Endothelial cell of umbilical vein (primary cell): ENCODE measurements at regions of chr5 and their contacts with region 1.

Region 1: DNA sequence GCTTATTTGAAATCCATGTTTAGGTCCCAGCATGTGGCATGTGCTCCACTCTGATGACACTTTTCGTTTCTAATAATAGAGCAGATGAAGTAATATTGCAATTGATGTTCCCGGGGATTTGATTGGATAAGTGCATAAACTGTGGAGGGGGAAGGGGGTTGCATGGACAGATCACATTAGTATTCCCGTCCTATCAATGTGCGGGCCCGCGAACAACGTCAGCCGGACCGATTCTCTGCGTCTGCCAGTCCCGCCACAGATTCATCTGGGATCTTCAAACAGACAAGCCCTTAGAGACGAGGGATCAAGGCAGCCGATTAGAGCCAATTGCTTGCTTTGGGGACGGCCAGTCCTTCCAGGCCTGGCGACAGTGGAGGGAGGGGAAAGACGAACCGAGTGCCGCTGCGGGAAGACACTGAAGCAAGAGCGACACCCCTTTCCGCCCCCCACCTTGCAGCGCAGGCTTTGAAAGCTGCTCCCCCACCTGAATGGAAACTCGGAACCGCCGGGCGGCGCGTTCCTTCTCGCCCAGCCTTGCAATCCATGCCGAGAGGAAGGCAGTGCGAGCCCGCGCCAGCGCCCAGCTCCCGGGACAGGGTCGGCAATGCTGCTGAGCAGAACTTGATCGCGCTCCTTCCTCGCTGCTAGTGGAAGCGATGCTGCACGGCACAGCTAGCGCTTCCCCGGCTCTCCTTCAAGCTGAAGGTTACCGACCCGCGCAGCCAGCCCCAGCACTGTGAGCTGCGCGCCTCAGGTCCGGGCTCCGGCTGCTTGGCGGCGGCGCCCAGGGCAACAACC is at the start of gene RGS7BP:
- DNase-seq: peak; percentile 66
- H3K4me3 ChIP-seq: peak within 1 kb of the TSS; percentile 27 to 48 (median 47)
- H3K27ac ChIP-seq: no peak within 1 kb of the TSS
- H3K4me1 ChIP-seq: peaks cover 33% of the 10 kb centered on the region
- H3K27me3 ChIP-seq: peaks cover 21 to 32% of the 10 kb centered on the region in 2 experiments
- CTCF ChIP-seq: no peak
- POLR2A ChIP-seq: no peak
- total RNA-seq, gene RGS7BP: 2.0 and 4.2 TPM in 2 replicates

Region 2: DNA sequence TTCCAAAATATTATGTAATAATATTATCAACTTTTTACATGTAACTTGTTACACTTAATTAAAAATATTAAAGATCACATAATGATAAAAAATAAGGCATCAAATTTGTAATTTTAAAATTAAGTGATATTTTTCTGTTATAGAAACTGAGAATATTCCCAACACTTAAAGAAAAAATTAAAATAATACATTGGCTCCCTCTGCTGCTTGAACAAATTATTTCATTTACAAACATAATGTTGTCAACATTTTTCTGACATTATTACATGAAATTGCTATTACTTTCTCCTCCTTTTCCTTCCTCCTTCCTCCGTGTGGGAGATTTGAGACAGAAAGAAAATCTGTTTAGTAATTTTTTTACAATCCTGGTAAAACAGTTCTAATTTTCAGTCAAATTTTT is 298.0 kb before region 1 on chr5:
- CTCF ChIA-PET with region 1: no interaction called
- POLR2A ChIA-PET with region 1: no interaction called
- dilution Hi-C with region 1: no loop called
- intact Hi-C with region 1: loop called (anchors 5 kb)
- DNase-seq: peak; percentile 40
- H3K4me3 ChIP-seq: no peak overlapping the region
- H3K27ac ChIP-seq: no peak overlapping the region
- H3K4me1 ChIP-seq: peaks cover 16% of the 10 kb centered on the region
- H3K27me3 ChIP-seq: no peaks in the 10 kb centered on the region
- CTCF ChIP-seq: no peak
- POLR2A ChIP-seq: no peak

Region 3: DNA sequence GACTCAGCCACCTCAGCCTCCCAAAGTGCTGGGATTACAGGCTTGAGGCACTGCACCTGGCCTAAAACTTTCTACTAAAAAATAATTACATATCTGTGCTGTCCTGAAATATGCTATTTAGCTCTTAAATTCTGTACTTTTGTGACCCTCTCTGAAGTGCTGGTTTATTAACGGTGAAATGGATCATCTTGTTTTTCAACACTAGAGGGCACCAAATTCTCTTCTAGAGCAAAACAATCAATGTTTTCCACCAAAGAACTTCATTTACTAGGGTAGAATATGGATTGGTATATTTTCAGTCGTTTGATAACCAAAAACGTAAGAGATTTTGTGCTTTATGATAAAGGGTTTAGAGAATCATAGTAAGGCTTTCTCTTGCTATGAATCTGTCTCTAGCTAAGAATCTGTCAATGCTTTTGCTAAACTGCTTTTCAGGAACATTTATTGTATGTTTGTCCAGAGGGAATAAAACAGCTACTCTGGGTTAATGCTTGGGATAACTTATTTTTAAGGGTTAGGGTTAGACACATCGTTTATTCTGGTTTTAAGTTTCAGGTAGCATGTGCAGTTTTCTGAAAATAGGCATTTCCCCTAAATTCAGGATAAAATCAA is 276.7 kb before region 1 on chr5:
- CTCF ChIA-PET with region 1: interaction called, 7 read pairs
- POLR2A ChIA-PET with region 1: no interaction called
- dilution Hi-C with region 1: no loop called
- intact Hi-C with region 1: loop called (anchors 1 kb)
- DNase-seq: peak; percentile 49
- H3K4me3 ChIP-seq: no peak overlapping the region
- H3K27ac ChIP-seq: no peak overlapping the region
- H3K4me1 ChIP-seq: no peaks in the 10 kb centered on the region
- H3K27me3 ChIP-seq: no peaks in the 10 kb centered on the region
- CTCF ChIP-seq: peak; percentile 24 to 41
- POLR2A ChIP-seq: no peak

Region 4: DNA sequence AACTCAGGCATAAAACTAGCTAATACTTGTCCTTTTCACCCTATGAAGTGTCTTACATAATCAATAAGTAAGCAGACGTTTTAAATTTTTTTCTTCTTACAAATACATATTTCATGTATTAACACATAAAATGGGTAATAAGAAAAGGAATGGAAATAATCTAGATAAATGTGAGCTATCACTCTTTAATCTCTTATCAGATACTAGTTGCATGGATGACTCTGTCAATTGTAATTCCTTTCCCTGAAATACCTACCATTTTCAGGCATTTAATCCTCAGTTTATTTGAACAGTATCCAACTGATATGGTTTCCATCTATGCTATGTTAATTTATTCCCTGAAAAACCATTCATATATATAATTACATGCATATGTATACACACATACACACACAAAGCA is 166.2 kb before region 1 on chr5:
- CTCF ChIA-PET with region 1: no interaction called
- POLR2A ChIA-PET with region 1: no interaction called
- dilution Hi-C with region 1: no loop called
- intact Hi-C with region 1: no loop called
- DNase-seq: no peak
- H3K4me3 ChIP-seq: no peak overlapping the region
- H3K27ac ChIP-seq: no peak overlapping the region
- H3K4me1 ChIP-seq: no peaks in the 10 kb centered on the region
- H3K27me3 ChIP-seq: no peaks in the 10 kb centered on the region
- CTCF ChIP-seq: no peak
- POLR2A ChIP-seq: no peak

Region 5: DNA sequence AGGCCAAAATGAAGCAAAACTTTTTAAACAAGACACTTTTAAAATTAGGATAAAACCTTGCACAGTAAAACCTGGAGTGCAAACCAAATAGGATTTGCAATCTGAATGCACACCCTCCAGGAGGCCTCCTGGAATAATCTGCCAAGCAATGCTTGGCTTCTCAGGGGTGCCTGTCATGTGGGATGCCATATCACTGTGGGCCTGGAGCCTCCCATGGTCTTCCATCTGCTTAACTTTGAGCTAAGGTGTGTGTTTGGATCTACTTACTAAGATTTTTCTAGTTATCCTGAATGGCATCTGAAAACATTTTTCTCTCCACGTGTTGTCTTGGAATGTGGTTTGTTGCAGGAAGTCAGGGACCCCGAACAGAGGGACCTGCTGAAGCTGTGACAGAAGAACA is 51.9 kb after region 1 on chr5:
- CTCF ChIA-PET with region 1: no interaction called
- POLR2A ChIA-PET with region 1: no interaction called
- dilution Hi-C with region 1: no loop called
- intact Hi-C with region 1: loop called (anchors 5 kb)
- DNase-seq: no peak
- H3K4me3 ChIP-seq: no peak overlapping the region
- H3K27ac ChIP-seq: no peak overlapping the region
- H3K4me1 ChIP-seq: peaks cover 6% of the 10 kb centered on the region
- H3K27me3 ChIP-seq: peaks cover 0 to 2% of the 10 kb centered on the region in 2 experiments
- CTCF ChIP-seq: no peak
- POLR2A ChIP-seq: no peak

Region 6: DNA sequence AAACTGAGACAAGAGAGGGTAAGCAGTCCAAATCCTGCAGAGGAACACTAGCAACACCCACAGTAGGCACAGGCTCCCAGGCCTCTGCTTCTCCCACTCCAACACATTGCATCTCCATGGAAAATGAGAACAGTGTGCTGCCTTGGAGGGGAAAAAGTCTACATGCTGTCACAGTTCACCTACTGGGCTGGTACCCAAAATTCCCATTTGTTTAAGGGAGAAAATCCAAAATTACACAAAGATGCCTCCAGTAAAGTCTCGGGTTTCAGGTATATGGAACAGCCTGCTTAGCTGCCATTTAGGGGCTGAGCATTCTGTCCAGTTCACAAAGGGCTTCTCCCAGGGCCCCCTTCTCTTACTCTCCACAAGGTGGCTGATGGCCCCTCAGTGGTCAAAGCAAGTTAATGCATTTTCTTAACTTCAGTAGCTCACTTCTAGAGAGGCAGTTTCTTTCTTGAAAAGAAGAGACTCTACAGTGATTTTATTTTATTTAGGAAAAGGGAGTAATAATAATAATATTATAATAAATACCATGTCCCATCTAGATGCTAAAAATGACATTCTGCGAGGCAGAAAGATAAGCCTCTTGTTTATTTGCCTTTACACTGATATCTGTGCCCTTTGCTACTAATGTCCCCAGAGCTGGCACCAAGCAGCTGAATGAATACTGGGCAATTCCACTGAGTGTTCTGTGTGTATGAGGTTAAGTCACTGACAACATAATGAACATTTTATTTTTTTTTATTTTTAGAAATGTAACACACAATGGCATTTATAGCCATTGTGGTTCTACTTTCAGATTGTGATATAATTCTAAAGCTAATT is 89.3 kb after region 1 on chr5:
- CTCF ChIA-PET with region 1: interaction called, 27 read pairs
- POLR2A ChIA-PET with region 1: no interaction called
- dilution Hi-C with region 1: no loop called
- intact Hi-C with region 1: loop called (anchors 1 kb)
- DNase-seq: peak; percentile 19
- H3K4me3 ChIP-seq: no peak overlapping the region
- H3K27ac ChIP-seq: no peak overlapping the region
- H3K4me1 ChIP-seq: no peaks in the 10 kb centered on the region
- H3K27me3 ChIP-seq: peaks cover 0 to 6% of the 10 kb centered on the region in 2 experiments
- CTCF ChIP-seq: peak; percentile 30 to 62
- POLR2A ChIP-seq: no peak

Region 7: GRCh38 chr5:64768358-64769312 is 262.7 kb after region 1 on chr5 and contains the starts of genes CWC27 and SREK1IP1:
- CTCF ChIA-PET with region 1: no interaction called
- POLR2A ChIA-PET with region 1: no interaction called
- dilution Hi-C with region 1: no loop called
- intact Hi-C with region 1: loop called (anchors 5 kb)
- DNase-seq: peak; percentile 92
- H3K4me3 ChIP-seq: peak within 1 kb of the TSS; percentile 72 to 97 (median 95)
- H3K27ac ChIP-seq: peak within 1 kb of the TSS; percentile 89
- H3K4me1 ChIP-seq: peaks cover 18% of the 10 kb centered on the region
- H3K27me3 ChIP-seq: no peaks in the 10 kb centered on the region
- CTCF ChIP-seq: peak in 1 of 2 donors; percentile 16
- POLR2A ChIP-seq: no peak
- total RNA-seq, gene CWC27: 23.8 and 25.2 TPM in 2 replicates
- total RNA-seq, gene SREK1IP1: 17.8 and 23.5 TPM in 2 replicates

Region 8: DNA sequence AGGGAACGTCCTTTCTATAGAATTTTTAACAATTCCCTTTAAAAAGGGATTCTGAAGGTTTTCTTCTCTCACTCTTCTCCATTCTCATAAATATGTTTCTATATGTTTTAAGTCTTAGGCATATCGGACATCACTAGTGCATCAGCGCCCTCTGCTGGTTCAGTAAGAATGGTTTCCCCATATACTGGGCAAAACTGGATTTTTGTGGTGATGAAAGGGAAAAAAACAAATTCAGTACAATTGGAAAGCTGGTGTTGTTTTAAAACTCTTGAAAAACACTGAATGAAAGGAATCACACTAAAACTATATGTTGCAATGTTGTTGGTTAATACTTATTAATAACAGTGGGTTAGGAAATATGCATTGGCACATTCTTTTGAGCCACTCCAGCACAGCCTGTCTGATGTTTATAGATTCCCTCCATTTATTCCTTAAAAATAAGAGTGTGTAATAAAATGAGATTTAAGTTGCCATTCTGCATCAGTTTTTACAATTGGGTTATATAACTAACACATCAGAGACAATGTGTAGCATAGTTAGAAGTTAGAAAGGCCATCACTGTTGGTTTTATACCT is 278.6 kb after region 1 on chr5:
- CTCF ChIA-PET with region 1: no interaction called
- POLR2A ChIA-PET with region 1: no interaction called
- dilution Hi-C with region 1: no loop called
- intact Hi-C with region 1: loop called (anchors 5 kb)
- DNase-seq: peak; percentile 76
- H3K4me3 ChIP-seq: no peak overlapping the region
- H3K27ac ChIP-seq: no peak overlapping the region
- H3K4me1 ChIP-seq: peaks cover 6% of the 10 kb centered on the region
- H3K27me3 ChIP-seq: no peaks in the 10 kb centered on the region
- CTCF ChIP-seq: peak; percentile 62 to 72
- POLR2A ChIP-seq: no peak